Posterior vena cava (tissue), 2 donors: ENCODE measurements at regions of chrX and their contacts with region 1.

Region 1: DNA sequence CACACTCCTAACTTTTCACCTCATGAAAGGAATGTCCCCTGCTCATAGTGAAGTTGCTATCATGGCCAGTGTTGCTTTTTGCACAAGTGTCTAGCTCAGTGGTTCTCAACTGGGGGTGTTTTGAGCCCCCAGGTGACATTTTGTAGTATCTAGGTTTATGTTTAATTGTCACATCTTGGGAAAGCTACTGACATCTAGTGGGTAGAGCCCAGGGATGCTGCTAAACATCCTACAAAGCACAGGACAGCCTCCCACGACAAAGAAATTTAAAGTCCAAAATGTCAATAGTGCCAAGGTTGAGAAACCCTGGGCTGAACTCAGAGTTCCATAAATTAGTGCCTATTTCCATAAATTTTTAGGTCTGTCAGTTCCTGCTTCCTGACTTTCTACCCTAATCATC is 70.7 kb upstream of the HCCS start:
- DNase-seq: no peak

Region 2: DNA sequence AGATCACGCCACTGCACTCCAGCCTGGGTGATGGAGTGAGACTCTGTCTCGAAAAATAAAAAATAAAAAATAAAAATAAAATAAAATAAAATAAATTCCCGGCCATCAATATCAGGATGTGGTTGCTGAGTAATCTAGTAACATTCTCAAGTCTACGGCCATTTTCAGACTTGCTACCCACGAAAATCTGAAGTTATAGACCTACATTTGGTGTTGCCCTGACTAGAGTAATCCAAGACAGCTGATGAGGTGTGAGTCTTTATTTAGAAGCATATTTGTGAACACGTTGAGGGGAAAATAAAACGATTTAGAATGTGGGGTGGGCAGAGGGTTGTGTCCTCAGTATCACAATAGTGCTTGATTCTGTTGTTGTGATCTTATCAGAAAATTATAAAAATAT is 289.8 kb before region 1 on chrX:
- intact Hi-C with region 1: loop called in 1 of 2 experiments (anchors 5 kb)
- DNase-seq: no peak